ENCODE measurements at regions of chr11 and their contacts with region 1.

Region 1: DNA sequence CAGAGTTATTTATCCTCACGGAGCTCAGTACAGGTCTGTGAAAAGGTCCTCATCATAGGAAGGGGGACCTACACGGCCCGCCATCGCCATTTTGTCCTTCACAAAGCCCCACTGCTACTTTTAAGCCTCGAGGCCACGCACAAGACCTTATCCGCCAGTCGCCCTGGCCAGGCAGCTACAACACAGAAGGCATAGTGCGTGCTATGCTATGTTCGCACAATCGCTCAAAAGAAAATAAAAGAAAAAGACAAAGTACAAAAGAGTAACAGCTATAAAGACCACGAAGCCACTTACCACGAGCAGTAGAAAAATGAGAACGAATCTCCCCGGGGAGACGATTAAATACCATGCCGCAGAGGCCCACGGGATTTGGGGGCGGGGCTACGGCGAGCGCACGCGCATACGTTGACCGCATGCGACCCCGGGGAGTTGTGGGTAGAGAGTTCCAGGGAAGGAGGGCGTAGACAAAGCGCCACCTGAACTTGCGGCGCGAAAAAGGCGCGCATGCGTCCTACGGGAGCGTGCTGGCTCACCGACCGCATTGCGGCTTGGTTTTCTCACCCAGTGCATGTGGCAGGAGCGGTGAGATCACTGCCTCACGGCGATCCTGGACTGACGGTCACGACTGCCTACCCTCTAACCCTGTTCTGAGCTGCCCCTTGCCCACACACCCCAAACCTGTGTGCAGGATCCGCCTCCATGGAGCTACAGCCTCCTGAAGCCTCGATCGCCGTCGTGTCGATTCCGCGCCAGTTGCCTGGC is 16.4 kb upstream of the WDR74 start:
- DNase-seq: peak; percentile 97
- ATAC-seq: peak; percentile 79
- H3K4me3 ChIP-seq: peak overlapping the region; percentile 86 to 96 (median 94)
- H3K27ac ChIP-seq: peak overlapping the region; percentile 91
- H3K4me1 ChIP-seq: peaks cover 77% of the 10 kb centered on the region
- H3K27me3 ChIP-seq: no peaks in the 10 kb centered on the region; a peak in 1 of 5 replicates
- CTCF ChIP-seq: peak; percentile 23; the same call in 1 of the 2 replicates
- EP300 ChIP-seq: 0 out of 4 replicates have a peak, but pooled peaks of 1 of the 2 experiments have one; percentile 8
- POLR2A ChIP-seq: peak; percentile 99 to 100
- RAD21 ChIP-seq: peak; percentile 16; the same call in 1 of the 2 replicates

Region 2: DNA sequence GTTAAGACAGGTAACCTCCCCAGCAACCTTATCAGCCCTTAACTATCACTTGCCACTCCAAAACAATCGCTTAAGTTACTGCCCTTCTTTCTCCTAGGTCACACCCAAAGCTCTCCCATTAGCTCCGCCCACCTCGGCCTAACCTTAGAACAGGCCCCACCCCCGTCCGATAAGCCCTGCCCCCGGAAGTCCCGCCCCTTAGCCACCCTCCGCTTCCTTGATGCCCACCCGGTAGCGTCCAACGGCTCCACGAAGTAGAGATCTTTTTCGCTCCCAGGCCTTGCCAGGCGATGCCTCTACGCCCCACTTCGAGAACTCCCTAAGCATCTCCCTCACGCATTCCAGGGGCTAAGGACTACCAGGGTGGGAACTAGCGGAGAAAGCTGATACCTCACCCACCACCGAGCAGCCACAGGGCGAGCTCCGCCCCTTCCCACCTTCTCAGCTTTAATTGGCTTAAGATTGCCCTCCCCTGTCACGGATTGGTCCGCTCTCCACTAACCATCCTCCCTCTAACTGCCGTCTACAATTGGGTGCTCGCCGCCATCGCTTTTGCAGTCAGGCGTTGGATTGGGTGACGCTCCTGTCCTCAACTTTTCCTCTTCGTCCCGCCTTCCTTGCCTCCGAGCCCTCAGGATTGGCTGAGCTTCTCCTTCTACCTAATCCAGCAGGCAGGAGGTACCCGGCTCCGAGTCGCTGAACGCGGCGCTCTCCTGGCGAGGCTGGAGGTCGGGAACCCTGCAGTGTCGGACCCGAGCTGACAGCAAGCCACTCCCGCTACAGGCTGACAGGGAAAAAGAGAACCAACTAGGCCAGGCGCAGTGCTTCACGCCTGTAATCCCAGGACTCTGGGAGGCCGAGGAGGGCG is 101.8 kb before region 1 on chr11 and contains the start of gene ZBTB3:
- CTCF ChIA-PET with region 1: no interaction called
- POLR2A ChIA-PET with region 1: interaction called, 35 read pairs
- in situ Hi-C with region 1: no loop called
- intact Hi-C with region 1: no loop called
- DNase-seq: peak; percentile 99
- ATAC-seq: peak; percentile 96
- H3K4me3 ChIP-seq: peak within 1 kb of the TSS; percentile 55 to 86 (median 81)
- H3K27ac ChIP-seq: peak within 1 kb of the TSS; percentile 75
- H3K4me1 ChIP-seq: peaks cover 35% of the 10 kb centered on the region
- H3K27me3 ChIP-seq: no peaks in the 10 kb centered on the region
- CTCF ChIP-seq: peak; percentile 29; the same call in 1 of the 2 replicates
- EP300 ChIP-seq: no peak
- POLR2A ChIP-seq: peak; percentile 83 to 88
- RAD21 ChIP-seq: no peak; the same call in 1 of the 2 replicates
- total RNA-seq, gene ZBTB3: 4.0 and 5.2 TPM in 2 replicates

Region 3: GRCh38 chr11:62811659-62812058 is 44.1 kb before region 1 on chr11:
- CTCF ChIA-PET with region 1: no interaction called
- POLR2A ChIA-PET with region 1: interaction called, 14 read pairs
- in situ Hi-C with region 1: no loop called
- intact Hi-C with region 1: no loop called
- DNase-seq: peak; percentile 50
- ATAC-seq: peak; percentile 89
- H3K4me3 ChIP-seq: no peak overlapping the region
- H3K27ac ChIP-seq: no peak overlapping the region
- H3K4me1 ChIP-seq: peaks cover 18% of the 10 kb centered on the region
- H3K27me3 ChIP-seq: no peaks in the 10 kb centered on the region
- CTCF ChIP-seq: no peak
- EP300 ChIP-seq: no peak
- POLR2A ChIP-seq: no peak
- RAD21 ChIP-seq: no peak

Region 4: DNA sequence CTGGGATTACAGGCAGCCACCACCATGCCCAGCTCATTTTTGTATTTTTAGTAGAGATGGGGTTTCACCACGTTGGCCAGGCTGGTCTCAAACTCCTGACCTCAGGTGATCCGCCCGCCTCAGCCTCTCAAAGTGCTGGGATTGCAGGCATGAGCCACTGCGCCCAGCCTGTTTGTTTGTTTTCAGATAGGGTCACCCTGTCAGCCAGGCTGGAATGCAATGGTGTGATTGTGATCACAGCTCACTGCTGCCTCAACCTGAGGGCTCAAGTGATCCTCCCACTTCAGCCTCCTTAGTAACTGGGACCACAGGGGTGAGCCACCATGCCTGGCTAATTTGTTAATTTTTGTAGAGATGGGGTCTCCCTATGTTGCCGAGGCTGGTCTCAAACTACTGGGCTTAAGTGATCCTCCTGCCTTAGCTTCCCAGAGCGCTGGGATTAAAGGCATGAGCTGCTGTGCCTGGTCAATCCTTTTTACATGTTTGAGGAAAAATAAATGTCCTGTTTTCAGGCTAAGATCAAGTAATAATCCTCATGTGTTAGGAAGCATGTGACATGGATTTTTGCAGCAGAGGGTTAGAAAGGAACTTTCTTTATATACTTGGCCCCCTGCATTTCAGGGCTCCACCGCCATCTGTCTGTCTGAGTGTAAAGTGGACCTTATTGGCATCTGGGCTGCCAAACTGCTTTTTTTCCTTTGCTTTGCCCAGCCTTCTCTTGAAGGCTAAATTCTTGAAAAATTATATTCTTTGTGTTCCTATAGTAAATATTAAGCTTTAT is 20.1 kb after region 1 on chr11:
- CTCF ChIA-PET with region 1: no interaction called
- POLR2A ChIA-PET with region 1: interaction called, 45 read pairs
- in situ Hi-C with region 1: no loop called
- intact Hi-C with region 1: loop called (anchors 1 kb)
- DNase-seq: peak; percentile 56
- ATAC-seq: peak; percentile 46
- H3K4me3 ChIP-seq: no peak overlapping the region
- H3K27ac ChIP-seq: peak overlapping the region; percentile 23
- H3K4me1 ChIP-seq: peaks cover 29% of the 10 kb centered on the region
- H3K27me3 ChIP-seq: no peaks in the 10 kb centered on the region
- CTCF ChIP-seq: no peak
- EP300 ChIP-seq: no peak
- POLR2A ChIP-seq: no peak
- RAD21 ChIP-seq: no peak

Region 5: DNA sequence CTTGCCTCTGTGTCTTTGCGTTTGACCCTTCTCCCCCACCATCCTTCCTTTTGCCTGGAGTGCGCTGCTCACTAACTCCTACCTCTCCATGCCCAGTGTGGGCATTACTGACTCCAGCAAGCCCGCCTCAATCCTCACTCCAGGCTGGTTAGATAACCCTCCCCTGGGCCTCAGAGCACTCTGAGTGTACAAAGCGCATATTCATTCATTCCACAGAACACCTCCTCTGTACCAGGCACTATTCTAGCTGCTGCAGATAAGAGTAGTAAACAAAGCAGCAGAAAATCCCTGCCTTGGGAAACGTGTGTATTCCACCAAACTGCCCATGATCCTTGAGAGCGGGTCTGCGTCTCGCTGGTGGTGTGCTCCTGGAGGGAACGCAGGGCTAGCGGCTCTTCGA is 156.7 kb after region 1 on chr11:
- CTCF ChIA-PET with region 1: no interaction called
- POLR2A ChIA-PET with region 1: no interaction called
- in situ Hi-C with region 1: no loop called
- intact Hi-C with region 1: no loop called
- DNase-seq: peak; percentile 52
- ATAC-seq: peak; percentile 49
- H3K4me3 ChIP-seq: no peak overlapping the region
- H3K27ac ChIP-seq: no peak overlapping the region
- H3K4me1 ChIP-seq: peaks cover 41% of the 10 kb centered on the region
- H3K27me3 ChIP-seq: peaks cover 4 to 10% of the 10 kb centered on the region in 2 experiments; a peak in 2 of 5 replicates
- CTCF ChIP-seq: no peak
- EP300 ChIP-seq: no peak
- POLR2A ChIP-seq: no peak
- RAD21 ChIP-seq: no peak